Left ventricle myocardium superior (tissue), 1 donor: ENCODE measurements at regions of chr3 and their contacts with region 1.

Region 1: GRCh38 chr3:142993958-142994442 is 7.4 kb upstream of the U2SURP start:
- DNase-seq: peak; percentile 64
- ATAC-seq: peak; percentile 44

Region 2: DNA sequence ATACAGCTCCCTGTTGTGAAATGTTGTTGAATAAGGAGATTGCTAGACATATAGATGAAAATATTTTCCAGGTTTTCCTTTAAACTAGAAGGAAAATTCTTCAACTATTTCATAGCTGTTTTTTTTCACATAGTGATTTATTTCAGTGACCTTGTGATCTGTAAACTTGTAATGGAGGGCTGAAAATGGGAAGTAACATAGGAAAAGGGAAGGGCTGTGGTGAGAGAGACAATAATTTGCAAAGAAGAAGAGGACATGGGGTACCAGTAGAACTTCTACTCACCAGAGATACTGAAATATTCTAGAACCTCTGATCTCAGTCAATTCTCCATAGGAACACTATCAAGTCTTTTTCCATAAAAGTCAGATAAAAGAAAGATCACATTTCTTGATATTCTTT is 337.4 kb before region 1 on chr3:
- intact Hi-C with region 1: no loop called
- DNase-seq: no peak
- ATAC-seq: no peak

Region 3: DNA sequence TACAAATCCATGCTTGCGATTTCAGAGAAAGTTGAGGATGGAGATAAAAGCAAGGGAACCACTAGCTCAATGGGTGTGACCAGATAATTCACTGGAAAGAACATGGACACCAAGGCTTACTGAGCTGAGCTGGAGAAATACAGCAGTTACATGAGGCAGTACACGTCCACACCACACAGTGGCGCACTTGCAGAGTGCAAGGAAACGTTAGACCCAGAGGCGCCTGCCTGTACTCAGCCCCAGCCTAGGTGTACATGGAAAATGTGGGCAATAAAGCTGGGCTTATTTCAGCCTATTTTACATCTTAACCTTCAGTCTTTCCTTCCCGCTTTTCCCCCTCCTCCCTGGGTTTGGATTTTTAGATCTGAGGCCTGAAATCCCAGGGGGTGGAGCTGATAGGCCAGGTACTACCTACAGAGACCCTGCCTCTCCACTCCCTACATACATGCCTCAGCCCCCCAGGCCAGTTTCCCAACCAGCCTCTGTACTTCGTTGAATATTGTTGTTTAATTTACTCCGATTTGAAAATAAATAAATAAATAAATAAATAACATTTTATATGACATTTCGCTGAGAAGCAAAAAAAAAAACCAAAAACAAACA is 165.2 kb before region 1 on chr3:
- intact Hi-C with region 1: loop called (anchors 5 kb)
- DNase-seq: peak; percentile 89
- ATAC-seq: peak; percentile 98